ENCODE measurements at regions of chr19 and their contacts with region 1.

Region 1: GRCh38 chr19:860481-861101 is 1.1 kb downstream of the CFD start:
- DNase-seq: peak; percentile 42 to 64 (median 59)
- H3K4me3 ChIP-seq: no peak overlapping the region
- H3K4me3 Mint-ChIP-seq: peak overlapping the region in 3 of 7 donors; percentile 23 to 32 (median 24)
- H3K27ac ChIP-seq: no peak overlapping the region
- H3K27ac Mint-ChIP-seq: no peak overlapping the region
- H3K4me1 ChIP-seq: peaks cover 24% of the 10 kb centered on the region
- H3K4me1 Mint-ChIP-seq: peaks cover 13 to 21% (median 15%) of the 10 kb centered on the region in 3 donors
- H3K27me3 ChIP-seq: peaks cover 13% of the 10 kb centered on the region
- H3K27me3 Mint-ChIP-seq: peaks cover 6 to 10% of the 10 kb centered on the region in 2 donors

Region 2: DNA sequence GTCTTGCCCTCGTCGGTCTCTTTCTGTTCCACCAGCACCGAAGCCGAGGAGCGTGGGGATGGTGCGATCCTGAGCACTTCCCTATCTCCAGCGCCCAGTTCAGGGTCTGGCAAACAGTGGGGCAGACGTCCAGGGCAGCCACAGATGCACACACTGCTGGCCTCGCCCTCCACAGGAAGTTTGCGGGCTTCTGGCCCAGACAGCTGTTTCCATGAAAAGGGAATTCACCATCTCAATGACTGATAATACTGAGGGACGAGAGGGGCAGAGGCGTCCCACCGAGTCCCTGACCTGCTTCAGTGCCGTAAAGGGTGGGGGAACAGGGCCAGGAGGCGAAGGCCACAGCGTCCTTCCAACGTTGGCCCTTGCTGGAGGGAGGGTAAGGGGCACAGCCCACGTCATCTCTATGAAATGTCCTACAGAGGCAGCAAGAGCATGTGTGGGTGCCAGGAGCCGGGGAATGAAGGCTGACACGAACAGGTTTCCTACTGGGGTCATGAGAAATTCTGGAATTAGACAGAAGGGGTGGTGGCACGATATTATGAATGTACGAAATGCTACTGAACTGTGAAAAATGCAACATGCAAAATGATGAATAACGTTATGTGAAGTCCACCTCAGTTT is 419.3 kb before region 1 on chr19:
- CTCF ChIA-PET with region 1: no interaction called
- POLR2A ChIA-PET with region 1: no interaction called
- DNase-seq: no peak
- H3K4me3 ChIP-seq: no peak overlapping the region
- H3K4me3 Mint-ChIP-seq: no peak overlapping the region
- H3K27ac ChIP-seq: no peak overlapping the region
- H3K27ac Mint-ChIP-seq: no peak overlapping the region
- H3K4me1 ChIP-seq: no peaks in the 10 kb centered on the region
- H3K4me1 Mint-ChIP-seq: no peaks in the 10 kb centered on the region
- H3K27me3 ChIP-seq: no peaks in the 10 kb centered on the region
- H3K27me3 Mint-ChIP-seq: peaks cover 4 to 27% of the 10 kb centered on the region in 2 donors

Region 3: GRCh38 chr19:737581-738093 is 123.0 kb before region 1 on chr19:
- CTCF ChIA-PET with region 1: no interaction called
- POLR2A ChIA-PET with region 1: no interaction called
- DNase-seq: peak; percentile 33 to 69 (median 44)
- H3K4me3 ChIP-seq: no peak overlapping the region
- H3K4me3 Mint-ChIP-seq: no peak overlapping the region
- H3K27ac ChIP-seq: no peak overlapping the region
- H3K27ac Mint-ChIP-seq: peak overlapping the region in 1 of 8 donors; percentile 89
- H3K4me1 ChIP-seq: no peaks in the 10 kb centered on the region
- H3K4me1 Mint-ChIP-seq: peaks cover 5 to 11% (median 5%) of the 10 kb centered on the region in 3 donors
- H3K27me3 ChIP-seq: no peaks in the 10 kb centered on the region
- H3K27me3 Mint-ChIP-seq: peaks cover 4% of the 10 kb centered on the region in 2 donors

Region 4: GRCh38 chr19:875265-875879 is 14.8 kb after region 1 on chr19:
- CTCF ChIA-PET with region 1: interaction called, 12 read pairs
- POLR2A ChIA-PET with region 1: interaction called, 7 read pairs
- DNase-seq: no peak
- H3K4me3 ChIP-seq: no peak overlapping the region
- H3K4me3 Mint-ChIP-seq: no peak overlapping the region
- H3K27ac ChIP-seq: no peak overlapping the region
- H3K27ac Mint-ChIP-seq: no peak overlapping the region
- H3K4me1 ChIP-seq: peaks cover 13% of the 10 kb centered on the region
- H3K4me1 Mint-ChIP-seq: peaks cover 6 to 18% (median 12%) of the 10 kb centered on the region in 3 donors
- H3K27me3 ChIP-seq: no peaks in the 10 kb centered on the region
- H3K27me3 Mint-ChIP-seq: peaks cover 0 to 3% of the 10 kb centered on the region in 2 donors

Region 5: DNA sequence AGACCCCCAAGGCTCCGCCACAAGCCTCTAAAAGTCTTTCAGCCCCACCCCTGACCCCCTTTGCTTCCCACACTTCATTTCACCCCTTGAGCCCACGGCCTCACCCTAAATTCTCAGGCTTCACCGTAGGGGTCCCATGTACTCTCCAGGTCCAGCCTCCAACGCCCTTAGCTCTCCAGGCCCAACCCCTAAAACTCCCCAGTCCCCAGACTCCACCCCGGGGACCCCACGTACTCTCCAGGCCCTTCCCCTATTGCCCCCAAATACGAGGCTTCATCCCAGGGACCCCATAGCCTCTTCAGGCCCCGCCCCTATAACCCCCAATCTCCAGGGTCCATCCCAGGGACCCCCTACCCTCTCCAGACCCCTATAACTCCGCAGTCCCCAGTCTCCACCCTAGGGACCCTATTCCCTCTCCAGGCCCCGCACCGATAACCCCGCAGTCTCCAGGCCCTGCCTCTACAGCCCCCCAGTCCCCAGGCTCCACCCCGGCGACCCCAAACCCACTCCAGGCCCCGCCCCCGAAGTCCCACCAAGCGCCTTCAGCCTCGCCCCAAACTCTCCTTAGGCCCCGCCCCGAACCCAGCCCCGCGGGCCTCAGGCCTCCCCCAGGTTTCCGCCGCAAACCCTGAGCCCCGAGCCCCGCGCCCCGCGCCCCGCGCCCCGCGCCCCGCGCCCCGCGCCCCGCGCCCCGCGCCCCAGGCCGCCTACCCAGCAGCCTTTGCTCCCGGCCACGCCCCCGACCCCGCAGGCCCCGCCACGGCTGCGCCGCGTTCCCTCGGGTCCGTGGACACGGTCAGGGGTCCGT is 31.9 kb after region 1 on chr19:
- CTCF ChIA-PET with region 1: interaction called, 26 read pairs
- POLR2A ChIA-PET with region 1: interaction called, 18 read pairs
- DNase-seq: peak in 3 of 5 donors; percentile 39 to 72 (median 44)
- H3K4me3 ChIP-seq: peak overlapping the region; percentile 74
- H3K4me3 Mint-ChIP-seq: peak overlapping the region; percentile 91 to 96 (median 92)
- H3K27ac ChIP-seq: peak overlapping the region; percentile 86
- H3K27ac Mint-ChIP-seq: peak overlapping the region; percentile 60 to 100 (median 93)
- H3K4me1 ChIP-seq: peaks cover 12% of the 10 kb centered on the region
- H3K4me1 Mint-ChIP-seq: peaks cover 21 to 59% (median 22%) of the 10 kb centered on the region in 3 donors
- H3K27me3 ChIP-seq: no peaks in the 10 kb centered on the region
- H3K27me3 Mint-ChIP-seq: peaks cover 0 to 5% of the 10 kb centered on the region in 2 donors

Region 6: GRCh38 chr19:907183-907853 is 46.7 kb after region 1 on chr19:
- CTCF ChIA-PET with region 1: interaction called, 50 read pairs
- POLR2A ChIA-PET with region 1: interaction called, 9 read pairs
- DNase-seq: peak in 1 of 5 donors; percentile 53
- H3K4me3 ChIP-seq: no peak overlapping the region
- H3K4me3 Mint-ChIP-seq: peak overlapping the region in 6 of 7 donors; percentile 15 to 86 (median 47)
- H3K27ac ChIP-seq: peak overlapping the region; percentile 20
- H3K27ac Mint-ChIP-seq: peak overlapping the region; percentile 24 to 100 (median 97)
- H3K4me1 ChIP-seq: peaks cover 52% of the 10 kb centered on the region
- H3K4me1 Mint-ChIP-seq: peaks cover 34 to 67% (median 42%) of the 10 kb centered on the region in 3 donors
- H3K27me3 ChIP-seq: no peaks in the 10 kb centered on the region
- H3K27me3 Mint-ChIP-seq: no peaks in the 10 kb centered on the region

Region 7: DNA sequence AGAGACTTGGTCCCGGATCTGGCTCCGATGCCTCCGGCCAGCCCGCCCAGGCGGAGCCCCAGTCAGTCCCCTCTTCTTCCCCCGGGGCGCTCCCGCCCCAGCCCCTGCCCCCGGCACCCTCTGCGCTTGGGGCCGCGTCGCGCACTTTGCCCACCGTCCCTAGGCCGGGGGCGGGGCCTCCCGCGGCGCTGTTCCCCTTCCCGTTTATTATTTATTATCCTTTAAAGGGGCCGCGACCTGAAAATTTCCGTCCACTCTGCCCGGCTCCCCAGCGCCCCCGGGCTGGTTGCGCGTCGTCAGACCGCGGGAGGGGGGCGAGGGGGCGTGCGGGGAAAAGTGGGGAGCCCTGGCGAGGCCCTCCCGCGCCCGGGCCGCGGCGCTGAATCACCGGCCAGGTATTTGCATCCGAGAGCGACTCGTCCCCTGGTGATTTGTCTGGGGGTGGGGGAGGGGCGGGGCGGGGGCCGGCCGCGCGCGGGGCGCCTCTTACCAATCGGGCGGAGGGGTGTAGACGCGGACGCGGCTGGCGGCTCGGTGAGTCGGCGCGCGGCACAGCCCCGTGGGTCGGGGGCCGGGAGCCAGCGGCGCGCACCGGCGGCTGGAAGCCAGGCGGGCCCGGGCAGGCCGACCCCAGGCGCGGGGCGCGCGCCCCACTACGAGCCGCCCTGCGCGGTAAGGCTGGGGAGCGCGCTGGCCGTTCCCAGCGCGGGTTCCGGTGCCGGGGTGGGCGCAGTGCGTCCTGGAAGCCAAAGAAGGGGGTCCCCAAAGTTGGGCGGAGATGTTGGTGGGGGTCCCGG is 65.1 kb after region 1 on chr19 and contains the start of gene ARID3A:
- CTCF ChIA-PET with region 1: interaction called, 107 read pairs
- POLR2A ChIA-PET with region 1: interaction called, 17 read pairs
- DNase-seq: peak; percentile 60 to 82 (median 74)
- H3K4me3 ChIP-seq: peak within 1 kb of the TSS; percentile 84
- H3K4me3 Mint-ChIP-seq: peak within 1 kb of the TSS; percentile 76 to 92 (median 83)
- H3K27ac ChIP-seq: peak within 1 kb of the TSS; percentile 74
- H3K27ac Mint-ChIP-seq: peak within 1 kb of the TSS in 7 of 8 donors; percentile 21 to 91 (median 76)
- H3K4me1 ChIP-seq: peaks cover 18% of the 10 kb centered on the region
- H3K4me1 Mint-ChIP-seq: peaks cover 4 to 30% (median 15%) of the 10 kb centered on the region in 3 donors
- H3K27me3 ChIP-seq: no peaks in the 10 kb centered on the region
- H3K27me3 Mint-ChIP-seq: no peaks in the 10 kb centered on the region
- total RNA-seq, gene ARID3A: 12.8 to 15.9 TPM

Region 8: GRCh38 chr19:1039646-1040475 is 179.3 kb after region 1 on chr19 and contains the start of gene ABCA7:
- CTCF ChIA-PET with region 1: no interaction called
- POLR2A ChIA-PET with region 1: no interaction called
- DNase-seq: peak; percentile 98 to 100 (median 99)
- H3K4me3 ChIP-seq: peak within 1 kb of the TSS; percentile 78
- H3K4me3 Mint-ChIP-seq: peak within 1 kb of the TSS; percentile 94 to 100 (median 99)
- H3K27ac ChIP-seq: peak within 1 kb of the TSS; percentile 72
- H3K27ac Mint-ChIP-seq: peak within 1 kb of the TSS; percentile 86 to 97 (median 92)
- H3K4me1 ChIP-seq: peaks cover 49% of the 10 kb centered on the region
- H3K4me1 Mint-ChIP-seq: peaks cover 41 to 61% (median 46%) of the 10 kb centered on the region in 3 donors
- H3K27me3 ChIP-seq: no peaks in the 10 kb centered on the region
- H3K27me3 Mint-ChIP-seq: peaks cover 0 to 1% of the 10 kb centered on the region in 2 donors
- total RNA-seq, gene ABCA7: 33.8 to 39.5 TPM